Ascending aorta (tissue), 2 donors: ENCODE measurements at regions of chrX and their contacts with region 1.

Region 1: GRCh38 chrX:154411322-154411980 is at the start of gene TAFAZZIN:
- DNase-seq: peak in 1 of 2 donors; percentile 81
- H3K4me3 ChIP-seq: peak within 1 kb of the TSS; percentile 60 to 82
- H3K27ac ChIP-seq: peak within 1 kb of the TSS; percentile 89 to 91
- H3K4me1 ChIP-seq: peaks cover 0 to 9% of the 10 kb centered on the region in 2 donors
- H3K27me3 ChIP-seq: no peaks in the 10 kb centered on the region
- CTCF ChIP-seq: no peak
- total RNA-seq, gene TAFAZZIN: 33.4 TPM

Region 2: DNA sequence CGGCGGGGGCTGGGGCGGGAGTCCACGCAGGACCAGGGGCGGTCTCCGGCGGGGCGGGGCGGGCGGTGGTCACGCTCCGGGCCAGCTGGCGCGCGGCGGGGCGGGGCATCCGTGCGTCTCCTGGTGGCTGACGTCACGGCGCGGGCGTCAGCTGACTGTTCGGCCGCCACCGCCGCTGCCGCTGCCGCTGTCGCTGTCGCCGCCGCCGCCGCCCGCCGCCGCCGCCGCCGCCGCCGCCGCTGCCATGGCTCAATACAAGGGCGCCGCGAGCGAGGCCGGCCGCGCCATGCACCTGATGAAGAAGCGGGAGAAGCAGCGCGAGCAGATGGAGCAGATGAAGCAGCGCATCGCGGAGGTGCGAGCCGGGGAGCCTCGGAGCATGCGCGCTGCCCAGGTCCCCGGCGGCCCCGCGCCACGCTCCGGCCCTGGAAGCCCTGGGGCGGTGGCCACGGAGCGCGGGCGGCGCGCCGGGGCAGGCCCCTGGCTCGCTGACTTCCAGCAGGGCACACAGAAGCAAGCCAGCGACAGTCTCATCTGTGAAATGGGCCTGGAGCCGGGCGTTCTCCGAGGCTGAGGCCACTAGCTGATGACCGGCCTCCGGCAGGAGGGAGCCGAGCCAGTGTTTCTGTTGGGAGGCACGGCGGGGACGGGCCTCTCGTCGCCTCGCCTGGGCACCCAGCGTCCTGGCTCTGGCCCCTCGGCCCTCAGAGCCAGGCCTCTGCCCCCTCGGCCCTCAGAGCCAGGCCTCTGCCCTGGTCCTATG is 32.7 kb after region 1 on chrX and contains the start of gene FAM50A:
- intact Hi-C with region 1: loop called (anchors 5 kb)
- DNase-seq: peak in 1 of 2 donors; percentile 85
- H3K4me3 ChIP-seq: peak within 1 kb of the TSS; percentile 77 to 85
- H3K27ac ChIP-seq: peak within 1 kb of the TSS; percentile 80 to 83
- H3K4me1 ChIP-seq: peaks cover 0 to 13% of the 10 kb centered on the region in 2 donors
- H3K27me3 ChIP-seq: no peaks in the 10 kb centered on the region
- CTCF ChIP-seq: peak in 1 of 3 experiments; percentile 26
- total RNA-seq, gene FAM50A: 52.4 TPM